IMR-90 (cell line): ENCODE measurements at regions of chr4 and their contacts with region 1.

Region 1: DNA sequence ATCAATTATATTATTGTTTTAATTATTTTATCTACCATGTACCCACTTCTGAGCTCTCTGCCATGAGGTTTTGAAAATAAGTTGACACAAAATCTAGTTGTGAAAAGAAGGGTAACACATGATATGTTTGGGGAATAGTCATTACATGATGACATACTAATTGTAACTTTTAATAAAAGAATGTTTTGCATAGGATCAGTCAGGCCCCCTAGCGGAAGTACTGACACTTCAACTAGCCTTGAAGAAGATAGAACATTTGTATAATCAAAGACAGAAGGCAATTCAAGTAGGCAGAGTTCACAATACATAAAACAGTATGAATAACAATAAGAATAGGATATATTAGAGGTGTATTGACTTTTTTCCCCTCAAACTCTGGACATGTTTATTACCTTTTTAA is 1191.0 kb upstream of the AGA start:
- DNase-seq: no peak
- ATAC-seq: no peak
- H3K4me3 ChIP-seq: no peak overlapping the region
- H3K27ac ChIP-seq: no peak overlapping the region
- H3K4me1 ChIP-seq: no peaks in the 10 kb centered on the region
- H3K27me3 ChIP-seq: no peaks in the 10 kb centered on the region
- CTCF ChIP-seq: no peak
- POLR2A ChIP-seq: no peak
- RAD21 ChIP-seq: no peak

Region 2: DNA sequence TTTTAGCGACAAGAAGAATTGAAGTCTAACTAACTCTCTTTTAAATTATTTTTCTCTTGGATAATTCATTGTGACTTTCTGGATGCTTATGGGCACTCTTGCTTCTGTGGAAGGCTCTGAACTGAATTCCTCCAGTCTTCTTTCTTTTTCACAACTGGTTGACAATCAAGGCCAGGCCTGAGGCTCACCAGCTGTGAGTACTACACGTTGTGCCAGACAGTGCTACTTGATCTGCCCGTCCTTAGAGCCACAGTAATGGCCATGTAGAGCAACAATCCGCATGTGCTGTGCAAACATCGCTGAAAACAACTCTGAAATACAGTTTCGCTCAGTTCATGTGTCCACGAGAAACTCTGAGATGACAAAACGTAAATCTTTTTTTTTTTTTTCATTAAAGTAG is 145.2 kb after region 1 on chr4:
- CTCF ChIA-PET with region 1: no interaction called
- POLR2A ChIA-PET with region 1: interaction called, 11 read pairs
- dilution Hi-C with region 1: no loop called
- in situ Hi-C with region 1: no loop called
- intact Hi-C with region 1: no loop called
- DNase-seq: no peak
- ATAC-seq: no peak
- H3K4me3 ChIP-seq: no peak overlapping the region
- H3K27ac ChIP-seq: no peak overlapping the region
- H3K4me1 ChIP-seq: no peaks in the 10 kb centered on the region
- H3K27me3 ChIP-seq: no peaks in the 10 kb centered on the region
- CTCF ChIP-seq: no peak
- POLR2A ChIP-seq: no peak
- RAD21 ChIP-seq: no peak

Region 3: DNA sequence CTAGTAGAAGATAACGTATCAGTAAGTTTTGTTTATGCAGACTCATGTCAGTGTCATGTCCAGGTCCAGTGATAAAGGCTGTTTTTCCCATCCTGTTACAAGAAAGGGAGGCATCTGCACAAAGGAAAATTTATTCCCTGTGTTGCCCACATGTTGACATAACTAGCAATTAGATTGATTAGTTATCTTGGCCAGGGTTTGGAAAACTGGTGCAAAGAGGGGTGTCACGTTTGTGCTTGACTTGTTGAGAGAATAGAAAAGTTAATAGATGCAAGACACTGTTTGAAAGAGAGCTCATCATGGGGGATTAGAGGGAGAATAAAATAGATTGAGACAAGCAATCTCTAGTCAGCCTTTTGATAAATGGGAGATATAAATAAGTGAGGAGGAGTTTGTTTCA is 165.9 kb after region 1 on chr4:
- CTCF ChIA-PET with region 1: no interaction called
- POLR2A ChIA-PET with region 1: no interaction called
- dilution Hi-C with region 1: no loop called
- in situ Hi-C with region 1: no loop called
- intact Hi-C with region 1: no loop called
- DNase-seq: no peak
- ATAC-seq: no peak
- H3K4me3 ChIP-seq: no peak overlapping the region
- H3K27ac ChIP-seq: no peak overlapping the region
- H3K4me1 ChIP-seq: no peaks in the 10 kb centered on the region
- H3K27me3 ChIP-seq: no peaks in the 10 kb centered on the region
- CTCF ChIP-seq: no peak
- POLR2A ChIP-seq: no peak
- RAD21 ChIP-seq: no peak